GM18951 (cell line): ENCODE measurements at regions of chr11 and their contacts with region 1.

Region 1: GRCh38 chr11:7353100-7353499 is 101.4 kb downstream of the SYT9 start:
- POLR2A ChIP-seq: no peak

Region 2: DNA sequence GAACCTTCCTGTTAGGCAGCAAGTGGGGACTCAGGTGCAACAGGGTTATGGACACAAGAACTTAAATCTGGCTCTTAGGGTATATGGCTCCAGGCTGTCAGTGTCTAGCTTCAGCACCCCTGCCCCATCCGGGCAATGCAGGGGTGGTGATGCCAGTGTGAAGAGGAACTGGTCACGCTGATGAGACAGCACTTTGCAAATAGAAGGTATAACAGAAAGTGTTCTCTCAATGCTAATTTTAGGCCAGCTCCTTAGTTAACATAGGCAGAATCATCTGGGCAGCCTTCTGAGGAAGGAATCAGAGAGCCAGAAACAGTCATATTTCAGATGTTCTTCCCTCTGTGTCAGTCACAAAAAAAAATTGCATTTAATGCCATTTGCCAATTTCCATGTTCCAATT is 60.2 kb before region 1 on chr11:
- in situ Hi-C with region 1: no loop called
- POLR2A ChIP-seq: no peak

Region 3: GRCh38 chr11:7442588-7443215 is 89.6 kb after region 1 on chr11:
- in situ Hi-C with region 1: loop called (anchors 10 kb)
- POLR2A ChIP-seq: no peak

Region 4: GRCh38 chr11:7688238-7688826 is 335.2 kb after region 1 on chr11:
- in situ Hi-C with region 1: loop called (anchors 25 kb)
- POLR2A ChIP-seq: no peak